Right ventricle myocardium superior (tissue), 1 donor: ENCODE measurements at regions of chr7 and their contacts with region 1.

Region 1: DNA sequence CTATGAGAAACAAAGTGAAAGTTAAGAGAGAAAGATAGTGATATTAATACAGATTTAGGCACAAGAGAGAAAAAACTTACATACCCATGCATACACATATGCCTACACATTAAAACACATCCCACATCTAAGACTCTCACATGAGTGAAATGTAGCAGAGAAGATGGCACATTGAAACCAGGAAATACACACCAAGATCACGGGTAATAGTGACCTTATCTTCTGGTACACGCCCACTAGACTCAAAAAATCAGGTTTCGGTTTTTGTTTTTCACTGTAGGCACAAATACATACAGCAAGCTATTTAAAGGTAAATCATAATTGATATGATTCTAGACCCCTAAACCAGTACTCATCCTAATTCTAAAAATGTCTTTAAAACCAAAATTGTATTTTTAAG is 225.2 kb upstream of the TAC1 start:
- DNase-seq: no peak
- ATAC-seq: no peak

Region 2: DNA sequence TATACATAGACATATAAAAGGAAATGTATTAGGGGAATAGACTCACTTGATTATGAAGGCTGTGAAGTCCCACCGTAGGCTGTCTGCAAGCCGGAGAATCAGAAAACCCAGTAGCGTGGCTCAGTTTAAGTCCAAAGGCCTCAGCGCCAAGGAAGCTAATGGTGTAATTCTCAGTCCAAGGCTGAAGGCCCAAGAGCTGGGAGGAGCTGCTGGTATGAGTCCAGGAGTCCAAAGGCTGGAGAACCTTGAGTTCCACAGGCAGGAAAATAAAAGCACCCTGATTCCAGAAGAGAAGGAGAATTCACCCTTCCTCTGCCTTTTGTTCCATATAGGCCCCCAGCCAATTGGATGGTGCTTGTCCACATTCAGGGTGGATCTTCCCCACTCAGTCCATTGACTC is 58.9 kb after region 1 on chr7:
- intact Hi-C with region 1: no loop called
- DNase-seq: no peak
- ATAC-seq: no peak

Region 3: DNA sequence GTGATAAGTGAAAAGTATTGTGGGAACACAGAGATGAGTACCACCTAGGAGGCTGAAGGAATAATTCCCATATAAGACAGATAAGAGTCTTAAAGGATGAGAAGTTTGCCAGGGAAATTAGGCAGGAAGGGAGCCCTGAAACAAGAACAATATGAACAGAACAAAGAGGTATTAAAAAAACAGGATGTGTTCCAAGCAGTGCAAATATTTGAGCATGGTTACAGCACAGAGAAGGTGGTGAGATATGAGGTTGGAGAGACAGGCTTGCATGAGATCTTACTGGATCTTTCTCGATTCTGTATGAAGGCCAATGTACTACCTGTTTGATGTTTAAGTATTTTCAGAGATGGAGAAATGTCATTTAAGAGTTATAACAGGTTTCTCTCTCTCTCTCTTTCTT is 245.5 kb after region 1 on chr7:
- intact Hi-C with region 1: no loop called
- DNase-seq: no peak
- ATAC-seq: no peak

Region 4: GRCh38 chr7:97845622-97846203 is 339.0 kb after region 1 on chr7:
- intact Hi-C with region 1: loop called (anchors 10 kb)
- DNase-seq: no peak
- ATAC-seq: no peak